Thyroid gland (tissue), 4 donors: ENCODE measurements at regions of chr11 and their contacts with region 1.

Region 1: GRCh38 chr11:65403607-65404121 is 17.2 kb downstream of the FRMD8 start:
- DNase-seq: no peak
- H3K4me3 ChIP-seq: no peak overlapping the region
- H3K27ac ChIP-seq: peak overlapping the region in 2 of 3 donors; percentile 10 to 81
- H3K4me1 ChIP-seq: peaks cover 0 to 5% of the 10 kb centered on the region in 2 donors
- H3K27me3 ChIP-seq: no peaks in the 10 kb centered on the region
- CTCF ChIP-seq: no peak
- POLR2A ChIP-seq: peak in 1 of 2 donors; percentile 16

Region 2: GRCh38 chr11:65595543-65596281 is 192.0 kb after region 1 on chr11 and contains the start of gene KCNK7:
- intact Hi-C with region 1: loop called (anchors 5 kb)
- DNase-seq: no peak
- H3K4me3 ChIP-seq: no peak within 1 kb of the TSS
- H3K27ac ChIP-seq: no peak within 1 kb of the TSS
- H3K4me1 ChIP-seq: peaks cover 0 to 4% of the 10 kb centered on the region in 2 donors
- H3K27me3 ChIP-seq: no peaks in the 10 kb centered on the region
- CTCF ChIP-seq: no peak
- POLR2A ChIP-seq: no peak
- total RNA-seq, gene KCNK7: 1.2 TPM in 1 of 4 donors, not detected in the others